Heart left ventricle (tissue), 16 donors: ENCODE measurements at regions of chr20 and their contacts with region 1.

Region 1: DNA sequence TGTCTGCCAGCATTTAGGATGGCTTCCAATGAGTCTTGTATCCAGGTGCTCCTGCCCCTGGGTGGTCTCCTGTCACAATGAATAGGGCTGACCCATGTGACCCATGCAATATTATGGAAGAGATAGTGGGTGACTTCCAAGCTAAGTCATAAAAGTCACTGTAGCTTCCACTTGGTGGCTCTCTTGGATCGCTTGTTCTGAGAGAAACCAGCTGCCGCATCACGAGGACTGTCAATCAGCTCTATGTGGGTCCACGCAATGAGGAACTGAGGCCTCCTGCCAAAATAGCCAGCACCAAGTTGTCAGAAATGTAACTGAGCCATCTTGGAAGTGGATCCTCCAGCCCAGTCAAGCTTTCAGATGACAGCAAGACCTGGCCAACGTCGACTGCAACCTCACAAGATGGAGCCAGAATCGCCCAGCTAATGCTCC is 14.9 kb upstream of the MATN4 start:
- DNase-seq: peak in 4 of 5 donors; percentile 63 to 80 (median 74)
- ATAC-seq: peak; percentile 77 to 82 (median 80)
- H3K4me3 ChIP-seq: no peak overlapping the region
- H3K27ac ChIP-seq: peak overlapping the region in 2 of 12 donors; percentile 41 to 42
- H3K4me1 ChIP-seq: peaks cover 0 to 22% (median 0%) of the 10 kb centered on the region in 12 donors
- H3K27me3 ChIP-seq: peaks cover 0 to 2% (median 0%) of the 10 kb centered on the region in 9 donors
- CTCF ChIP-seq: peak; percentile 17 to 63 (median 46)
- POLR2A ChIP-seq: no peak

Region 2: GRCh38 chr20:45444050-45444449 is 121.1 kb after region 1 on chr20:
- intact Hi-C with region 1: loop called in 5 of 10 experiments (anchors 5 kb)
- DNase-seq: no peak
- ATAC-seq: no peak
- H3K4me3 ChIP-seq: no peak overlapping the region
- H3K27ac ChIP-seq: no peak overlapping the region
- H3K4me1 ChIP-seq: no peaks in the 10 kb centered on the region
- H3K27me3 ChIP-seq: peaks cover 0 to 2% (median 0%) of the 10 kb centered on the region in 9 donors
- CTCF ChIP-seq: no peak
- POLR2A ChIP-seq: no peak